Gastrocnemius medialis (tissue), 4 donors: ENCODE measurements at regions of chr9 and their contacts with region 1.

Region 1: DNA sequence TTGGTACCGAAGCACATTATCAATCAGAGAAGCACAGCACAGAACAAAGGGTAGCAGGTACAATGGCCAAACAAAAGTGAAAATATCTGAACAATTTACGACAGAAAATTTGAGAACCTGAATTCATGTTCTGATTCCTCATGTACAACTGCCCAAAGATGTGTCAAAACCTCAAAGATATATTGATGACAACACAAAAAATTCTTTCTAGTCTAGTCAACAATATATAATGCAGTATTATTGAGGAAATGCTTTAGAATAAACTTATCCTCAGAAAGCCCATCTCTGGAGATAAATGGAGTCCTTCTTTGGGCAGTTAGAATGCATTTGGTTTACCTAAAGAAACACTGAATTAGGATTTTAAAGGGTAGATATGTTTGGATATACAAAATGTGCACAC is 6.8 kb upstream of the SMARCA2 start:
- DNase-seq: no peak
- ATAC-seq: no peak
- H3K4me3 ChIP-seq: no peak overlapping the region
- H3K27ac ChIP-seq: no peak overlapping the region
- H3K4me1 ChIP-seq: peaks cover 0 to under 1% of the 10 kb centered on the region in 2 donors
- H3K27me3 ChIP-seq: no peaks in the 10 kb centered on the region
- CTCF ChIP-seq: no peak
- POLR2A ChIP-seq: no peak

Region 2: GRCh38 chr9:1916655-1917054 is 91.7 kb before region 1 on chr9:
- in situ Hi-C with region 1: no loop called
- intact Hi-C with region 1: no loop called
- DNase-seq: no peak
- ATAC-seq: no peak
- H3K4me3 ChIP-seq: no peak overlapping the region
- H3K27ac ChIP-seq: no peak overlapping the region
- H3K4me1 ChIP-seq: no peaks in the 10 kb centered on the region
- H3K27me3 ChIP-seq: peaks cover 0 to 5% (median 0%) of the 10 kb centered on the region in 3 donors
- CTCF ChIP-seq: no peak
- POLR2A ChIP-seq: no peak

Region 3: DNA sequence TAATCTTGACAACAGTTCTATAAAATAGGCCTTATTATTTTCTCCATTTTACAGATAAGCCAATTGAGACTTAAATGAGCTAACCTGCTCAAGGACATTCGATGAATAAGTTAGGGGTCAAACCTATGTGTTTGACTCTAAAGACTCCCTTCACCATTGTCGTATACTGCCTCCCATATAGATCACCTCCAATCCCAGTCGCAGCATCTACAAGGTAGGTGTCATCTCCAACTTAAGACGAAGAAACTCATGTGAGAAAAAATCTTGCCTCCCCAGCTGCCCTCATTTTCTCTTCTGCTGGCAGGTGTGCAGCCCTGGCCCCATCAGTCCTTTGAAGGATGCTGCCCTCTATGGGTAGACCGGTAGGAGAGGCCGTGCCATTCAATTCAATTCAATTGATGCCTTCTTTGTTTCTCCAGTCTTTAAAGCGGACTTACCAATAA is 68.4 kb before region 1 on chr9:
- in situ Hi-C with region 1: no loop called
- intact Hi-C with region 1: loop called (anchors 5 kb)
- DNase-seq: no peak
- ATAC-seq: no peak
- H3K4me3 ChIP-seq: no peak overlapping the region
- H3K27ac ChIP-seq: no peak overlapping the region
- H3K4me1 ChIP-seq: no peaks in the 10 kb centered on the region
- H3K27me3 ChIP-seq: no peaks in the 10 kb centered on the region
- CTCF ChIP-seq: peak in 2 of 5 experiments; percentile 30 to 50
- POLR2A ChIP-seq: no peak